CD8-positive, alpha-beta T cell (primary cell): ENCODE measurements at regions of chr16 and their contacts with region 1.

Region 1: GRCh38 chr16:75464130-75464918 is at the start of gene TMEM170A:
- DNase-seq: peak; percentile 97 to 99 (median 99)
- ATAC-seq: peak; percentile 89
- H3K4me3 ChIP-seq: peak within 1 kb of the TSS; percentile 92 to 99
- H3K4me3 Mint-ChIP-seq: peak within 1 kb of the TSS; percentile 94
- H3K27ac ChIP-seq: peak within 1 kb of the TSS; percentile 96 to 99
- H3K27ac Mint-ChIP-seq: peak within 1 kb of the TSS; percentile 97
- H3K4me1 ChIP-seq: peaks cover 31% of the 10 kb centered on the region
- H3K4me1 Mint-ChIP-seq: peaks cover 42% of the 10 kb centered on the region
- H3K27me3 ChIP-seq: no peaks in the 10 kb centered on the region
- H3K27me3 Mint-ChIP-seq: no peaks in the 10 kb centered on the region
- CTCF ChIP-seq: peak; percentile 100
- total RNA-seq, gene TMEM170A: 36.9 to 37.5 TPM

Region 2: GRCh38 chr16:75148311-75149195 is 315.8 kb before region 1 on chr16 and contains the start of gene ZFP1:
- CTCF ChIA-PET with region 1: no interaction called
- POLR2A ChIA-PET with region 1: no interaction called
- intact Hi-C with region 1: loop called (anchors 1 kb)
- DNase-seq: peak; percentile 86 to 98 (median 95)
- ATAC-seq: peak; percentile 89
- H3K4me3 ChIP-seq: peak within 1 kb of the TSS; percentile 85 to 100
- H3K4me3 Mint-ChIP-seq: peak within 1 kb of the TSS; percentile 87
- H3K27ac ChIP-seq: peak within 1 kb of the TSS; percentile 84
- H3K27ac Mint-ChIP-seq: peak within 1 kb of the TSS; percentile 88
- H3K4me1 ChIP-seq: peaks cover 12% of the 10 kb centered on the region
- H3K4me1 Mint-ChIP-seq: peaks cover 16% of the 10 kb centered on the region
- H3K27me3 ChIP-seq: no peaks in the 10 kb centered on the region
- H3K27me3 Mint-ChIP-seq: no peaks in the 10 kb centered on the region
- CTCF ChIP-seq: no peak
- total RNA-seq, gene ZFP1: 11.9 to 12.9 TPM

Region 3: GRCh38 chr16:75238132-75238852 is 226.0 kb before region 1 on chr16:
- CTCF ChIA-PET with region 1: interaction called, 6 read pairs
- POLR2A ChIA-PET with region 1: no interaction called
- intact Hi-C with region 1: loop called in 1 of 2 experiments (anchors 1 kb)
- DNase-seq: no peak
- ATAC-seq: no peak
- H3K4me3 ChIP-seq: no peak overlapping the region
- H3K4me3 Mint-ChIP-seq: no peak overlapping the region
- H3K27ac ChIP-seq: no peak overlapping the region
- H3K27ac Mint-ChIP-seq: no peak overlapping the region
- H3K4me1 ChIP-seq: no peaks in the 10 kb centered on the region
- H3K4me1 Mint-ChIP-seq: peaks cover 2% of the 10 kb centered on the region
- H3K27me3 ChIP-seq: no peaks in the 10 kb centered on the region
- H3K27me3 Mint-ChIP-seq: no peaks in the 10 kb centered on the region
- CTCF ChIP-seq: no peak

Region 4: GRCh38 chr16:75432828-75433731 is 31.2 kb before region 1 on chr16 and contains the start of gene CFDP1:
- CTCF ChIA-PET with region 1: interaction called, 38 read pairs
- POLR2A ChIA-PET with region 1: interaction called, 20 read pairs
- intact Hi-C with region 1: loop called (anchors 1 kb)
- DNase-seq: peak; percentile 90 to 98 (median 96)
- ATAC-seq: peak; percentile 81
- H3K4me3 ChIP-seq: peak within 1 kb of the TSS; percentile 87 to 90
- H3K4me3 Mint-ChIP-seq: peak within 1 kb of the TSS; percentile 87
- H3K27ac ChIP-seq: peak within 1 kb of the TSS; percentile 95 to 98
- H3K27ac Mint-ChIP-seq: peak within 1 kb of the TSS; percentile 96
- H3K4me1 ChIP-seq: peaks cover 6% of the 10 kb centered on the region
- H3K4me1 Mint-ChIP-seq: peaks cover 38% of the 10 kb centered on the region
- H3K27me3 ChIP-seq: no peaks in the 10 kb centered on the region
- H3K27me3 Mint-ChIP-seq: no peaks in the 10 kb centered on the region
- CTCF ChIP-seq: no peak
- total RNA-seq, gene CFDP1: 18.6 to 20.3 TPM

Region 5: DNA sequence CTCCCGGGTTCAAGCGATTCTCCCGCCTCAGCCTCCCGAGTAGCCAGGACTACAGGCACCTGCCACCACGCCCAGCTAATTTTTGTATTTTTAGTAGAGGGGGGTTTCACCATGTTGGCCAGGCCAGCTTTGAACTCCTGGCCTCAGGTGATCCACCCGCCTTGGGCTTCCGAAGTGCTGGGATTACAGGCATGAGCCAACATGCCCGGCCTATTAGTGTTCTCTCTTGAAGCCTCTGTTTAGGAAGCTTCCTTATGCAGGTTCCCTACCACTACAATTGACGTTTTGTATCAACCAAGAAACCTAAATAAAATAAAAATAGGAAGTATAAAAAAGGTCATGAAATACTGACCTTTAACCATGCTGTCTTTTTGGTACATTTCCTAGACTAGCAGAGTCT is 55.6 kb after region 1 on chr16:
- CTCF ChIA-PET with region 1: interaction called, 8 read pairs
- POLR2A ChIA-PET with region 1: interaction called, 10 read pairs
- intact Hi-C with region 1: loop called (anchors 1 kb)
- DNase-seq: no peak
- ATAC-seq: no peak
- H3K4me3 ChIP-seq: no peak overlapping the region
- H3K4me3 Mint-ChIP-seq: no peak overlapping the region
- H3K27ac ChIP-seq: no peak overlapping the region
- H3K27ac Mint-ChIP-seq: no peak overlapping the region
- H3K4me1 ChIP-seq: peaks cover 4% of the 10 kb centered on the region
- H3K4me1 Mint-ChIP-seq: peaks cover 16% of the 10 kb centered on the region
- H3K27me3 ChIP-seq: no peaks in the 10 kb centered on the region
- H3K27me3 Mint-ChIP-seq: no peaks in the 10 kb centered on the region
- CTCF ChIP-seq: no peak

Region 6: DNA sequence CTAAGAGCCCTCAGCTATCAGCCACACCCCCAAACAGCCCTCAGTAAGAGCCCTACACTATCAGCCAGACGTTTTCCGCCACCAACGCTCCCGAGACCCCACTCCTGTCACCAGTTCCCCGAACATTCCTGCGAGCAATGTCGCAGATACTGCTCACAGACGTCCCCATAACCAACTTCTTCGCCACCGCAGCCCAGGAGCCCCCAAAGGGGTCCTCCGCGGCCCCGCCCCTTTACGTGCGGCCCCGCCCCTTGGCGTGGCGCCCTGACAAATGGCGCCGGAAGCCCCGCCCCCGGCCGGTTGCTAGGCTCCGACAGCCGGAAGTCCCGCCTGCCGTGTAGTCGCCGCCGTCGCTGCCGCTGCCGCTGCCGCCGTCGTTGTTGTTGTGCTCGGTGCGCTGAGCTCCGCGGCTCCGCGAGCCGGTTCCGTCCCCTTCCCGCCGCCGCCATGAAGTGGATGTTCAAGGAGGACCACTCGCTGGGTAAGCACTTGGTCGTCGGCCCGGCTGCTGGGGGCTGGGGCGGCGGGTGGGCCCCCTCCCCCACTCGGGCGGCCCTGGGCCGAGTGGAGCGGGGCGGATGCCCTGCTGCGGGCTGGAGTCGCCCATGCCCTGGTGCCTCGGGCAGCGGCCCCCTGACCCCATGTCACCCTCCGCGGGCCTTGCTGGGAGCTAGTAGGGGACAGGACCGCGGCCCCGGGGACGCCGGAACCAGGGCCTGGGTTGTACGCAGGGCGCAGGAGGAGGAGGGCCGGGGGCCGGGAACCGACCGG is 101.9 kb after region 1 on chr16 and contains the start of gene GABARAPL2:
- CTCF ChIA-PET with region 1: interaction called, 3 read pairs
- POLR2A ChIA-PET with region 1: interaction called, 3 read pairs
- intact Hi-C with region 1: loop called (anchors 1 kb)
- DNase-seq: peak; percentile 84 to 96 (median 91)
- ATAC-seq: peak; percentile 72
- H3K4me3 ChIP-seq: peak within 1 kb of the TSS; percentile 87 to 98
- H3K4me3 Mint-ChIP-seq: peak within 1 kb of the TSS; percentile 94
- H3K27ac ChIP-seq: peak within 1 kb of the TSS; percentile 81 to 90
- H3K27ac Mint-ChIP-seq: peak within 1 kb of the TSS; percentile 97
- H3K4me1 ChIP-seq: peaks cover 12% of the 10 kb centered on the region
- H3K4me1 Mint-ChIP-seq: peaks cover 46% of the 10 kb centered on the region
- H3K27me3 ChIP-seq: peaks cover 0 to 3% of the 10 kb centered on the region in 2 experiments
- H3K27me3 Mint-ChIP-seq: peaks cover 15% of the 10 kb centered on the region
- CTCF ChIP-seq: no peak
- total RNA-seq, gene GABARAPL2: 37.4 to 39.4 TPM

Region 7: DNA sequence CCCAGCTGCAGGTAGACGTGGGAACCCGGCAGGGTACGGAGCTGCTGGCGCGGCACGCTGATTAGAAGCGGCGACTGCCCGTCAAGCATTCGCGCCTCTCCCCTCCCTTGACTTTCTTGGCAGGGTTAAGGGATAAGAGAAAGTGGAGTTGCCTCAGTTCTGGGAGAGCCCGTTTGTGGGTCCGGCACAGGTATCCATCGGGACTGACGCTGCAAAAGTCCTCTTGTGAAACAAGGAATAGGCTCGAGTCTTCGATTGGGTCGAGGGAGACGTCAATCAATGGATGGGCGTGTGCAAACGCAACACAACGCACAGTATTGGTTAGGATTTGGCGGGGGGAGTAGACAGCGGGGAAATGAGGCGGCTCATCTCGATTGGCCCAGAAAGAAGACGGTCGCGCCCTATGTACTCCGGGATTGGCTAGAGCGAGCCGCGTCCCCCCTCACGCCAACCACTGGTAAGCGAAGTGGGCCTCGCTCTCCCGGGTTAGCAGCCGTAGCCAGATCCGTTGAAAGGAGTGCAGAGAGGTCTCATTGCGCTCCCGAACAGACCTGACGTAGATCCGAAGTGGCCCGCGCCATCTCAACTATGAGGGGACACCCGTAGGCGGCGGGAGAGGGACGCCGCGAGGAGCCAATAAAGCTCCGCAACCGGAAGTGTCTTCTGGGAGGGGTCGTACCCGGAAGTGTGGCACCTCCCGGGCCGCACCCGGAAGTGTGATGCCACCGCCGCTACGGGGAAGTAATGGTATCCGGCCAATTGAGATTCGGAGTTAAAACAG is 1726.3 kb after region 1 on chr16 and contains the start of gene MON1B:
- CTCF ChIA-PET with region 1: no interaction called
- POLR2A ChIA-PET with region 1: interaction called, 3 read pairs
- intact Hi-C with region 1: loop called (anchors 1 to 2 kb)
- DNase-seq: peak; percentile 88 to 99 (median 95)
- ATAC-seq: peak; percentile 93
- H3K4me3 ChIP-seq: peak within 1 kb of the TSS; percentile 70 to 81
- H3K4me3 Mint-ChIP-seq: peak within 1 kb of the TSS; percentile 100
- H3K27ac ChIP-seq: peak within 1 kb of the TSS; percentile 98
- H3K27ac Mint-ChIP-seq: peak within 1 kb of the TSS; percentile 100
- H3K4me1 ChIP-seq: peaks cover 26% of the 10 kb centered on the region
- H3K4me1 Mint-ChIP-seq: peaks cover 52% of the 10 kb centered on the region
- H3K27me3 ChIP-seq: no peaks in the 10 kb centered on the region
- H3K27me3 Mint-ChIP-seq: peaks cover 6% of the 10 kb centered on the region
- CTCF ChIP-seq: no peak
- total RNA-seq, gene MON1B: 49.1 to 50.7 TPM